Left cardiac atrium (tissue), 4 donors: ENCODE measurements at regions of chr3 and their contacts with region 1.

Region 1: GRCh38 chr3:17204049-17204650 is 319.4 kb downstream of the PLCL2 start:
- DNase-seq: no peak
- ATAC-seq: no peak

Region 2: GRCh38 chr3:16589867-16590624 is 614.1 kb before region 1 on chr3:
- intact Hi-C with region 1: no loop called
- DNase-seq: no peak
- ATAC-seq: no peak

Region 3: DNA sequence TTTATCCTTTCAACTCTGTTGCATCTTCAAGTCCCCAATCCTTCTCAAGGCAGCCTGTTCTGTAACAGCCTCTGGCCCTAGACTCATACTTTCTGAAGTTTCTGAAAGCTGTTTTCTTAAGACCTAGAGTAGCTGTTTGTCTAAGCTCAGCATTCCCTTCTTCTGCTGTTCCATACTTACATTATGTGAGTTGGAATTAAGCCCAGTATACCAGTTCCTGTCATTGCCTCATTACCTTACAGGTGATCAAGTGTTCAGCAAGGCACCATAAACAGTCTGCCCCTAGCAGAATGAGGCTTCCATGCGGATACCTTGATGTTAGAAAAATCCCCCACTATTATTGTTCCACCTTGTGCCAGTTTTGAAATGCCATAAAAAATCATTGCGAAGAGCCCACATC is 138.8 kb before region 1 on chr3:
- intact Hi-C with region 1: loop called in 1 of 2 experiments (anchors 10 kb)
- DNase-seq: no peak
- ATAC-seq: no peak